ENCODE measurements at regions of chr21 and their contacts with region 1.

Region 1: GRCh38 chr21:45768751-45769070 is 125.2 kb downstream of the PCBP3 start:
- DNase-seq: peak in 1 of 9 experiments; percentile 21
- ATAC-seq: no peak
- H3K4me3 ChIP-seq: no peak overlapping the region
- H3K4me3 Mint-ChIP-seq: no peak overlapping the region
- H3K27ac ChIP-seq: no peak overlapping the region
- H3K27ac Mint-ChIP-seq: peak overlapping the region; percentile 91
- H3K4me1 ChIP-seq: peaks cover 27% of the 10 kb centered on the region
- H3K4me1 Mint-ChIP-seq: peaks cover 32% of the 10 kb centered on the region
- H3K27me3 ChIP-seq: no peaks in the 10 kb centered on the region
- H3K27me3 Mint-ChIP-seq: no peaks in the 10 kb centered on the region
- CTCF ChIP-seq: no peak

Region 2: GRCh38 chr21:45554477-45555175 is 214.1 kb before region 1 on chr21:
- CTCF ChIA-PET with region 1: no interaction called
- POLR2A ChIA-PET with region 1: no interaction called
- intact Hi-C with region 1: loop called in 1 of 2 experiments (anchors 5 kb)
- DNase-seq: peak; percentile 80 to 97 (median 91)
- ATAC-seq: peak; percentile 90
- H3K4me3 ChIP-seq: peak overlapping the region; percentile 73 to 81
- H3K4me3 Mint-ChIP-seq: peak overlapping the region; percentile 91
- H3K27ac ChIP-seq: peak overlapping the region; percentile 37 to 60
- H3K27ac Mint-ChIP-seq: peak overlapping the region; percentile 91
- H3K4me1 ChIP-seq: peaks cover 38% of the 10 kb centered on the region
- H3K4me1 Mint-ChIP-seq: peaks cover 31% of the 10 kb centered on the region
- H3K27me3 ChIP-seq: no peaks in the 10 kb centered on the region
- H3K27me3 Mint-ChIP-seq: no peaks in the 10 kb centered on the region
- CTCF ChIP-seq: peak; percentile 60

Region 3: DNA sequence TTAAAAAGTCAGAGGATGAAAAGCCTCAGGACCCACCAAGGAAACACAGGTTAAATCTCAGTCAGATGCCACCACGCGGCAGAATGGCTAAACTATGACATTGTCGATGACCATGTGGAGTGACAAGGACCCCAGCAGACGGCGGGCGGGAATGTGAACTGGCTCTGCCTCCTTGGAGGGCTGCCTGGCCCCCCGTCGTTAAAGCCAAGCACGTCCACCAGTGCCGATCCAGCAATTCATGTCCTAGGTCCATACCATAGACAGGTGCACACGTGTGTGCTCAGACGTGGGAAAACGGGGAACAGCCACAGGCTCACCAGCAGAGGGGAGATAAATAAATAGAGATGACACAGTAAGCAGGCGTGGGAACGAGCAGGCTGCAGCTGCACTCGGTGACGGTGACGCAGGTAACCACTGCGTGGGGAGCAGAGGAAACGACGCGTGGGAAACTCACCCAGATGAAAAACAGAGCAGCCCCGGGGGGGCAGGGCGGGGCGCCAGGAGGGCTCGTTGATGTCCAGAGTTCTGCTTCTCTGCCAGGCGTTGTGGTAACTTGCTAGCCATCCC is 153.5 kb before region 1 on chr21:
- CTCF ChIA-PET with region 1: no interaction called
- POLR2A ChIA-PET with region 1: no interaction called
- intact Hi-C with region 1: loop called in 1 of 2 experiments (anchors 1 kb)
- DNase-seq: peak; percentile 68 to 97 (median 89)
- ATAC-seq: peak; percentile 89
- H3K4me3 ChIP-seq: peak overlapping the region; percentile 46 to 51
- H3K4me3 Mint-ChIP-seq: peak overlapping the region; percentile 81
- H3K27ac ChIP-seq: peak overlapping the region; percentile 55 to 96
- H3K27ac Mint-ChIP-seq: peak overlapping the region; percentile 98
- H3K4me1 ChIP-seq: peaks cover 26% of the 10 kb centered on the region
- H3K4me1 Mint-ChIP-seq: peaks cover 36% of the 10 kb centered on the region
- H3K27me3 ChIP-seq: peaks cover 0 to 4% of the 10 kb centered on the region in 2 experiments
- H3K27me3 Mint-ChIP-seq: no peaks in the 10 kb centered on the region
- CTCF ChIP-seq: peak; percentile 43

Measured in CD8-positive, alpha-beta T cell (primary cell).